Activated naive CD4-positive, alpha-beta T cell treated with anti-CD3 and anti-CD28 coated beads, Interleukin-2, amount 10 ng/mL, durations not matched to agents 7 days and 5 days (primary cell): ENCODE measurements at regions of chr20 and their contacts with region 1.

Region 1: DNA sequence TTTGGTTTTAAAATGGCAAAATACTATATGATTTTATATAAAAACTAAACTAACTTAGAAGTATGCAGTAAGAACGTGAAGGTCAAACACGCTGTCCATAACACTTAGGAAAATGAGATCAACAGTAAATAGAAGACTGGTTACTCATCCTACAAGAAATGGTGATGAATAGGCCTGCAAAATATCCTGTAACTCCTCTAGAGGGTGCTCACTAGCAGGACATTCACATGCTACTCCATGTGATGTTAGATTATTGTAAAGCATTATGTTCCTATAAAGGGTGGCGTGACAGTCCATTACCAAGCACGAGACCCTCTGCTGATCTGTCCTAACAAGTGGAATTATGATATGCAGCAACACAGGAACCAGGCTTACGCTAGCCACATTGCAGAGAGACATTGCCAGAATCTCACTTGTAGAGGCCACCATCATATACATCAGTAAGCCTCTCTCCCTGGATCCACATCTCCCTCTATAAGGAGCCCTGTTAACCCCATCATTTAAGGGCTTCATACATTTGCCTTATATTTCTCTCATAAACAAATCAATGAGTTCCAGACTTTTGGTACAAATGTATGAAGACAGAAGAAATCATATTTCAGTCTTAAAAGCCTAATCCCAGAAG is 18.0 kb upstream of the DEFB129 start:
- DNase-seq: peak; percentile 38
- H3K4me3 Mint-ChIP-seq: no peak overlapping the region
- H3K27ac Mint-ChIP-seq: no peak overlapping the region
- H3K4me1 Mint-ChIP-seq: no peaks in the 10 kb centered on the region
- H3K27me3 Mint-ChIP-seq: peaks cover 7% of the 10 kb centered on the region

Region 2: GRCh38 chr20:266596-267562 is 57.8 kb after region 1 on chr20:
- CTCF ChIA-PET with region 1: interaction called, 35 read pairs
- DNase-seq: peak; percentile 93
- H3K4me3 Mint-ChIP-seq: peak overlapping the region; percentile 72
- H3K27ac Mint-ChIP-seq: no peak overlapping the region
- H3K4me1 Mint-ChIP-seq: peaks cover 10% of the 10 kb centered on the region
- H3K27me3 Mint-ChIP-seq: peaks cover 35% of the 10 kb centered on the region

Region 3: DNA sequence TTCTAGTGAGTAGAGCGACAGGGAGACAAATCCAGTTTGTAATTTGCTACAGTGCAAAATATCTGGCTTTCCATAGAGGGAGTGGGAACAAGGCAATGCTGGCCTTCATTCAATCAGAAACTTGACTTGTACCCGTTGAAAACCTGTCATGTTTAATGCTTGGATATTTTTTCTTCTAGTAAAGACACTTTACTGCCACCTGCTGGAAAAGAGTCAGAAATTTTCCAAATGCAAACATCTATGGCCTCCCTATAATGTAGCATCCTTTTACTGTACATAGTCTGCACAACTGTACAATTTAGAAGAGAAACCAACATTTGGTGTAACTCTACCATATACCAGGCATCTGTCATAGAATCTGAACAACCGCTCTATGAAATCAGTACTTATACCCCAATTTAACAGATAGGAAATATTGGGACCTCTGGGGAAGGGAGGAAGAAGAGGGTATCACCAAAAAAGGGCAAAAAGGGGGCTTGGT is 269.9 kb after region 1 on chr20:
- CTCF ChIA-PET with region 1: no interaction called
- DNase-seq: peak; percentile 45
- H3K4me3 Mint-ChIP-seq: no peak overlapping the region
- H3K27ac Mint-ChIP-seq: peak overlapping the region; percentile 79
- H3K4me1 Mint-ChIP-seq: peaks cover 51% of the 10 kb centered on the region
- H3K27me3 Mint-ChIP-seq: no peaks in the 10 kb centered on the region